Heart right ventricle (tissue), 16 donors: ENCODE measurements at regions of chrX and their contacts with region 1.

Region 1: GRCh38 chrX:49915361-49916222 is 6.8 kb upstream of the CLCN5 start:
- DNase-seq: peak in 1 of 2 donors; percentile 20
- ATAC-seq: peak in 7 of 8 donors; percentile 49 to 71 (median 61)
- H3K4me3 ChIP-seq: no peak overlapping the region
- H3K27ac ChIP-seq: no peak overlapping the region
- H3K4me1 ChIP-seq: peaks cover 0 to 12% (median 4%) of the 10 kb centered on the region in 9 donors
- H3K27me3 ChIP-seq: peaks cover 0 to 40% (median 0%) of the 10 kb centered on the region in 7 donors
- CTCF ChIP-seq: peak; percentile 48 to 91 (median 77)

Region 2: GRCh38 chrX:49748211-49748956 is 167.2 kb before region 1 on chrX:
- intact Hi-C with region 1: no loop called
- DNase-seq: no peak
- ATAC-seq: no peak
- H3K4me3 ChIP-seq: no peak overlapping the region
- H3K27ac ChIP-seq: no peak overlapping the region
- H3K4me1 ChIP-seq: no peaks in the 10 kb centered on the region
- H3K27me3 ChIP-seq: peaks cover 0 to 73% (median 0%) of the 10 kb centered on the region in 7 donors
- CTCF ChIP-seq: no peak

Region 3: GRCh38 chrX:49878834-49879659 is 36.5 kb before region 1 on chrX and contains the start of gene USP27X:
- intact Hi-C with region 1: loop called in 1 of 10 experiments (anchors 5 kb)
- DNase-seq: peak; percentile 71 to 78
- ATAC-seq: peak; percentile 91 to 96 (median 94)
- H3K4me3 ChIP-seq: peak within 1 kb of the TSS; percentile 41 to 75 (median 64)
- H3K27ac ChIP-seq: peak within 1 kb of the TSS; percentile 43 to 90 (median 82)
- H3K4me1 ChIP-seq: peaks cover 0 to 36% (median 5%) of the 10 kb centered on the region in 9 donors
- H3K27me3 ChIP-seq: peaks cover 0 to 6% (median 0%) of the 10 kb centered on the region in 7 donors
- CTCF ChIP-seq: peak; percentile 13 to 70 (median 48)
- total RNA-seq, gene USP27X: 1.8 to 2.9 (median 2.0) TPM

Region 4: DNA sequence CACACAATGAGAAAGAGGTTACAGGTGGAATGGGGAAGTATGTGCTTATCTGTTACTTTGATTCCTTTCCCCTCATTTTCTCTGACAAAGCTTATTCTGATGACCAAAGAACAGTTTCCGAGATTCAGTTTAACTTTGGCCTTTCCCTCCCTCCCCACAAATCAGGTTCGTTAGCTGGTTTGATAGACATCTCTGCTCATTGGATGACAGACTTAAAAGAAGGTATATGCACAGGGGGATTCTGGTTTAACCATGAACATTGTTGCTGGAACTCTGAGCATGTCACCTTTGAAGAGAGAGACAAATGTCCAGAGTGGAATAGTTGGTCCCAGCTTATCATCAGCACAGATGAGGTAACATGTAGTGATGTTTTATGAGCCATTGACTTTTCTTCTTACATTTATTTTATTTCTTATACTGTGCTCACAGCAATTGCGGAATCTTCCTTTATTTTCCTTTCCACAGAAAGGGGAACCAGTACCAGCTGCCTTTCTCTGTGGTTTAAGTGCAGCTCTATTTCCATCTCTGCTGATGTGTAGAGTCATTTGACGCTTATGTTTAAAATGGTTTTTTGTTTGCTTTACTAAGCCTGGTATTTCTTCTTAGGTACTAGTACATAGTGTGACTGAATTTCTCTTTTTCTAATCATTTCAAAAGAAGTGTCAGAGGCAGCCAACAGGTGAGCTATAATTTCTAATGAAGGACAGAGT is 160.2 kb after region 1 on chrX:
- intact Hi-C with region 1: loop called in 9 of 10 experiments (anchors 5 to 10 kb)
- DNase-seq: no peak
- ATAC-seq: no peak
- H3K4me3 ChIP-seq: no peak overlapping the region
- H3K27ac ChIP-seq: no peak overlapping the region
- H3K4me1 ChIP-seq: no peaks in the 10 kb centered on the region
- H3K27me3 ChIP-seq: no peaks in the 10 kb centered on the region
- CTCF ChIP-seq: no peak

Region 5: GRCh38 chrX:50081282-50081889 is 165.8 kb after region 1 on chrX:
- intact Hi-C with region 1: loop called (anchors 1 to 10 kb)
- DNase-seq: peak; percentile 13 to 15
- ATAC-seq: peak in 4 of 8 donors; percentile 34 to 73 (median 62)
- H3K4me3 ChIP-seq: no peak overlapping the region
- H3K27ac ChIP-seq: no peak overlapping the region
- H3K4me1 ChIP-seq: no peaks in the 10 kb centered on the region
- H3K27me3 ChIP-seq: peaks cover 0 to 8% (median 0%) of the 10 kb centered on the region in 7 donors
- CTCF ChIP-seq: peak in 7 of 9 donors; percentile 27 to 57 (median 47)

Region 6: GRCh38 chrX:50204364-50204899 is 288.8 kb after region 1 on chrX and contains the start of gene CCNB3:
- intact Hi-C with region 1: loop called in 3 of 10 experiments (anchors 5 kb)
- DNase-seq: peak; percentile 64 to 67
- ATAC-seq: peak; percentile 85 to 96 (median 94)
- H3K4me3 ChIP-seq: peak within 1 kb of the TSS in 9 of 10 donors; percentile 19 to 46 (median 36)
- H3K27ac ChIP-seq: peak within 1 kb of the TSS in 4 of 10 donors; percentile 21 to 71 (median 34)
- H3K4me1 ChIP-seq: peaks cover 0 to 7% (median 0%) of the 10 kb centered on the region in 9 donors
- H3K27me3 ChIP-seq: peaks cover 0 to 8% (median 0%) of the 10 kb centered on the region in 7 donors
- CTCF ChIP-seq: peak; percentile 33 to 71 (median 65)
- total RNA-seq, gene CCNB3: 0.06 to 0.42 (median 0.19) TPM in 8 of 10 donors, not detected in the others

Region 7: GRCh38 chrX:50579955-50580354 is 664.4 kb after region 1 on chrX:
- intact Hi-C with region 1: loop called in 8 of 10 experiments (anchors 5 to 10 kb)
- DNase-seq: peak in 1 of 2 donors; percentile 18
- ATAC-seq: peak in 1 of 8 donors; percentile 60
- H3K4me3 ChIP-seq: no peak overlapping the region
- H3K27ac ChIP-seq: no peak overlapping the region
- H3K4me1 ChIP-seq: no peaks in the 10 kb centered on the region
- H3K27me3 ChIP-seq: peaks cover 0 to 44% (median 0%) of the 10 kb centered on the region in 7 donors
- CTCF ChIP-seq: peak in 8 of 9 donors; percentile 21 to 64 (median 56)

Region 8: DNA sequence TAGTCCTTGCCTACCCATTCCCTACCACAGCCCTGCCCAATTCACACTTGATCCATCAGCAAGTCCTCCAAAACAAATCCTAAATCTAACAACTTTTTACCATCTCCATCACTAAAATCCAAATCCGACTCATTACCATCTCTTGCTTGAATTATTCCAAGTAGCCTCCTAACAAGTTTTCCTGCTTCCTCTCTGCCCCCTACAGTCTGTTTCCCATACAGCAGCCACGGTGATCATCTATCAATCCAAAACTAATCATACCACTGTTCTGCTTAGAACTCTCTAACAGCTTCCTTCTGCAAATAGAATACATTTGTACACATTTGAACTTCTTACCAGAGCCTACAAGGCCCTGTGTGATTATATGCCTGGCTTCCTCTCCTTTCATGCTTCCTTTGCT is 765.4 kb after region 1 on chrX:
- intact Hi-C with region 1: loop called in 1 of 10 experiments (anchors 5 kb)
- DNase-seq: no peak
- ATAC-seq: no peak
- H3K4me3 ChIP-seq: no peak overlapping the region
- H3K27ac ChIP-seq: no peak overlapping the region
- H3K4me1 ChIP-seq: peaks cover 0 to 9% (median 0%) of the 10 kb centered on the region in 9 donors
- H3K27me3 ChIP-seq: peaks cover 0 to 72% (median 0%) of the 10 kb centered on the region in 7 donors
- CTCF ChIP-seq: peak in 8 of 9 donors; percentile 18 to 60 (median 48)